K562 (cell line): ENCODE measurements at regions of chr12 and their contacts with region 1.

Region 1: GRCh38 chr12:65121049-65121955 is at the start of gene WIF1:
- DNase-seq: no peak
- ATAC-seq: no peak; the same call in 2 of the 3 replicates
- H3K4me3 ChIP-seq: no peak within 1 kb of the TSS
- H3K27ac ChIP-seq: no peak within 1 kb of the TSS
- H3K4me1 ChIP-seq: peaks cover 0 to 10% of the 10 kb centered on the region in 2 experiments; a peak in 3 of 5 replicates
- H3K27me3 ChIP-seq: peaks cover 2 to 10% of the 10 kb centered on the region in 2 experiments; a peak in 2 of 5 replicates
- CTCF ChIP-seq: 0 out of 6 replicates have a peak, but pooled peaks of 1 of the 3 experiments have one; percentile 11
- EP300 ChIP-seq: no peak
- POLR2A ChIP-seq: no peak
- RAD21 ChIP-seq: no peak
- polyA plus RNA-seq, gene WIF1: not detected

Region 2: DNA sequence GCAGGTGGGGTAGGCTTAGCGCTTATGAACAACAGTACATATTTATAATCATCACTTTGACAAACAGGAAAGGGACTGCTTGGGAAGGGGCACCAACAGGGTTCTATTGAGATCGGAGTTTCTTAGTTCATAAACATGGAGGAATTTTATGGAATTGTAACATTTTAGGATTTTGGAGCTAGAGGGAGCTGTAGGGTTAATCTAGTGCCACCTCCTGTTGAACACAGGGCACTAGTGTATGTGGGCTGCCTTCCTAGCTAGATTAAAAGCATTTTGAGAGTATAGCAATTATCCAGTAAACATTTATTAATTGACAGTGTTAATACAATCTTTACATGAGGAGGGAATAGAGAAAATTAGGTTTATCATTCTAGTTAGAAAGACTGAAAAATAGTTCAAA is 319.9 kb before region 1 on chr12:
- CTCF ChIA-PET with region 1: no interaction called
- POLR2A ChIA-PET with region 1: no interaction called
- in situ Hi-C with region 1: no loop called
- intact Hi-C with region 1: loop called (anchors 5 kb)
- DNase-seq: peak in 2 of 4 experiments; percentile 25 to 34
- ATAC-seq: peak; percentile 72
- H3K4me3 ChIP-seq: no peak overlapping the region
- H3K27ac ChIP-seq: no peak overlapping the region
- H3K4me1 ChIP-seq: no peaks in the 10 kb centered on the region
- H3K27me3 ChIP-seq: peaks cover 5 to 13% of the 10 kb centered on the region in 2 experiments; a peak in 3 of 5 replicates
- CTCF ChIP-seq: peak; percentile 39 to 90 (median 68); a peak in 4 of 6 replicates
- EP300 ChIP-seq: no peak
- POLR2A ChIP-seq: no peak
- RAD21 ChIP-seq: peak in 1 of 2 experiments; percentile 49; a peak in 2 of 4 replicates

Region 3: GRCh38 chr12:65232476-65233077 is 111.3 kb after region 1 on chr12:
- CTCF ChIA-PET with region 1: no interaction called
- POLR2A ChIA-PET with region 1: no interaction called
- in situ Hi-C with region 1: no loop called
- intact Hi-C with region 1: loop called (anchors 10 kb)
- DNase-seq: peak in 2 of 4 experiments; percentile 10 to 12
- ATAC-seq: no peak
- H3K4me3 ChIP-seq: no peak overlapping the region
- H3K27ac ChIP-seq: no peak overlapping the region
- H3K4me1 ChIP-seq: no peaks in the 10 kb centered on the region
- H3K27me3 ChIP-seq: no peaks in the 10 kb centered on the region
- CTCF ChIP-seq: peak in 1 of 3 experiments; percentile 48; a peak in 2 of 6 replicates
- EP300 ChIP-seq: no peak
- POLR2A ChIP-seq: no peak
- RAD21 ChIP-seq: peak; percentile 59 to 60